Psoas muscle (tissue), 8 donors: ENCODE measurements at regions of chrX and their contacts with region 1.

Region 1: DNA sequence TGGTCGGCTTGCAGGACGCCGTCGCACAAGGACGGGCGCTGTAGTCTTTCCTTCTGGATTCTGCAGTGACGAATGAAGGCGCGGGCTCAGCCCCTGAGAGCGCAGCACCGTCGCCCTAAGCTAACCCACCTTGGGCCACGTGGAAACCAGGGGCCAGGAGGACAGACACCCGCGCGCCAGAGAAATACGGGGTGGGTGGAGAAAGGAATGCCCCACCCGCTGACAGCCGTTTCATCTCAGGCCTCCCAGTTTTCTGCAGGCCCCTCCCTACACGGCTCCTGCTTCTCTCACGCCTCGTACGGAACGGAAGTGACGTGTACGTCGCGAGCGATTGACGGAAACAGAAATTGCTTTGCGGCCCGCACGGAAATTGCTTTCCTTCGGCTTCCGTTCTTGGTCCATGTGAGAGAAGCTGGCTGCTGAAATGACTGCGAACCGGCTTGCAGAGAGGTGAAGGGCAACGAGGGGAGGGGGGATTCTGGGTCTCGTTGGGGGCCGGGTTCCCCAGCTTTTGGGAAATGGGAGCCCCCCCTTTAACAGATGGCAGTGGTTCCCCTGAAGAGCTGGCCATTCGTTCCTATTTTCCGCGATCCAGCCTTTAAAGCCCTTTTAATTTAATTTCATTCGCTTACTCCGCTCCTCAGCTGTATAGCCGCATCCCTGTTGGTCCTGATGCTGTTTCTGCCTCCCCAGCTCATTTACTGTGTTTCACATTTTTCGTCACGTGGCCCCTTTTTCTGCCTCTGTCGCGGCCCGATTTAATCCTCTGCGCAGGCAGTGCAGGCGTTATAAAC is at the start of gene UTP14A:
- DNase-seq: peak; percentile 87 to 93
- ATAC-seq: peak; percentile 95 to 99 (median 98)
- H3K4me3 ChIP-seq: peak within 1 kb of the TSS; percentile 81
- H3K27ac ChIP-seq: peak within 1 kb of the TSS; percentile 79
- H3K4me1 ChIP-seq: no peaks in the 10 kb centered on the region
- H3K27me3 ChIP-seq: no peaks in the 10 kb centered on the region
- CTCF ChIP-seq: no peak
- total RNA-seq, gene UTP14A: 15.2 to 18.9 (median 16.2) TPM

Region 2: GRCh38 chrX:129433461-129433860 is 472.5 kb before region 1 on chrX:
- intact Hi-C with region 1: loop called in 1 of 2 experiments (anchors 10 kb)
- DNase-seq: no peak
- ATAC-seq: no peak
- H3K4me3 ChIP-seq: no peak overlapping the region
- H3K27ac ChIP-seq: no peak overlapping the region
- H3K4me1 ChIP-seq: no peaks in the 10 kb centered on the region
- H3K27me3 ChIP-seq: no peaks in the 10 kb centered on the region
- CTCF ChIP-seq: no peak

Region 3: DNA sequence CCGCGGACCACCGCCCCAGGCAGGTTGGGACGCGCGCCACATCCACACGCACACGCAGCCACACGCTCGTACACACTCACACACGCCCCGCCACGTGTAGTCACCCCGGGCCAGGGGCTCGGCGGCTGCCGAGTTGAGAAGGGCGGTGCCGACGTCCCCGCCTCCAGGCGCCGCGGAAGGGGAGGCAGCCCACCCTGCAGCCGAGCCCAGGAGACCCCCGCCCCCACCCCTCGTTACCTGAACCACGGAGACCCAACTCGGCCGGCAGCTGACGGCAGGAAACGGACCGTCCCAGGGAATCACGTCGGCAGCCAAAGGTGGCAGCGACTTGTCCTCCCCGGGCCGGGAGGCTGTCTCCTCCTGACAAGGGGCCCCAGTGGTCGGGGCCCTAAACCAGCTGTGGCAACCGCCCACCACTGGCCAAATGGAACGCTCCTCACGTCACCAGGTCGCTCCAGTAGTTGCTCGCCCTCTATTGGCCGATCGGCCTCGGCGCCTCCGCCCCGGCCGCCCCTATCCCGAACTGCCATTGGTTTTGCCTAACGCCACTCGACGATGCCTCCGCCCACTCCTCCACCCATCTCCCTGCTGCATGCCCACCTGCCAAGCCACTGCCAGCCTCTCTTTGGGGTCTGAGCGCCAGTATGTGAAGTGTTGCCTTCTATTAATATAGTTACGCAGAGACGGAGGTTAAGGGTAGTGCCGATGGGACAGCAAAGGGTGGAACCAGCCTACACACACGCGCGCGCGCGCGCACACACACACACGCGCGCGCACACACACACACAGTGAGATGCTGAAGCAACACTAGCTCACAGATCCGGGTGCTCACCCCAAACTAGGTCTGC is 62.3 kb before region 1 on chrX and contains the start of gene ZDHHC9:
- intact Hi-C with region 1: loop called in 1 of 2 experiments (anchors 5 kb)
- DNase-seq: peak; percentile 85 to 92
- ATAC-seq: peak; percentile 93 to 98 (median 95)
- H3K4me3 ChIP-seq: peak within 1 kb of the TSS; percentile 74
- H3K27ac ChIP-seq: peak within 1 kb of the TSS; percentile 75
- H3K4me1 ChIP-seq: no peaks in the 10 kb centered on the region
- H3K27me3 ChIP-seq: no peaks in the 10 kb centered on the region
- CTCF ChIP-seq: no peak
- total RNA-seq, gene ZDHHC9: 13.8 to 30.3 (median 17.6) TPM

Region 4: GRCh38 chrX:129976441-129976840 is 70.5 kb after region 1 on chrX:
- intact Hi-C with region 1: no loop called
- DNase-seq: no peak
- ATAC-seq: no peak
- H3K4me3 ChIP-seq: no peak overlapping the region
- H3K27ac ChIP-seq: no peak overlapping the region
- H3K4me1 ChIP-seq: no peaks in the 10 kb centered on the region
- H3K27me3 ChIP-seq: no peaks in the 10 kb centered on the region
- CTCF ChIP-seq: no peak

Region 5: GRCh38 chrX:130125091-130125874 is 219.3 kb after region 1 on chrX:
- intact Hi-C with region 1: no loop called
- DNase-seq: peak; percentile 35 to 56
- ATAC-seq: peak in 3 of 4 donors; percentile 38 to 45 (median 43)
- H3K4me3 ChIP-seq: no peak overlapping the region
- H3K27ac ChIP-seq: peak overlapping the region; percentile 31
- H3K4me1 ChIP-seq: no peaks in the 10 kb centered on the region
- H3K27me3 ChIP-seq: no peaks in the 10 kb centered on the region
- CTCF ChIP-seq: no peak